ENCODE measurements at regions of chr5 and their contacts with region 1.

Region 1: GRCh38 chr5:154072414-154073171 is 33.8 kb downstream of the MFAP3 start:
- DNase-seq: peak; percentile 22 to 89
- H3K4me3 ChIP-seq: peak overlapping the region in 1 of 2 donors; percentile 38
- H3K27ac ChIP-seq: peak overlapping the region in 1 of 2 donors; percentile 5
- H3K4me1 ChIP-seq: no peaks in the 10 kb centered on the region
- H3K27me3 ChIP-seq: no peaks in the 10 kb centered on the region
- CTCF ChIP-seq: peak; percentile 90 to 93 (median 90)

Region 2: DNA sequence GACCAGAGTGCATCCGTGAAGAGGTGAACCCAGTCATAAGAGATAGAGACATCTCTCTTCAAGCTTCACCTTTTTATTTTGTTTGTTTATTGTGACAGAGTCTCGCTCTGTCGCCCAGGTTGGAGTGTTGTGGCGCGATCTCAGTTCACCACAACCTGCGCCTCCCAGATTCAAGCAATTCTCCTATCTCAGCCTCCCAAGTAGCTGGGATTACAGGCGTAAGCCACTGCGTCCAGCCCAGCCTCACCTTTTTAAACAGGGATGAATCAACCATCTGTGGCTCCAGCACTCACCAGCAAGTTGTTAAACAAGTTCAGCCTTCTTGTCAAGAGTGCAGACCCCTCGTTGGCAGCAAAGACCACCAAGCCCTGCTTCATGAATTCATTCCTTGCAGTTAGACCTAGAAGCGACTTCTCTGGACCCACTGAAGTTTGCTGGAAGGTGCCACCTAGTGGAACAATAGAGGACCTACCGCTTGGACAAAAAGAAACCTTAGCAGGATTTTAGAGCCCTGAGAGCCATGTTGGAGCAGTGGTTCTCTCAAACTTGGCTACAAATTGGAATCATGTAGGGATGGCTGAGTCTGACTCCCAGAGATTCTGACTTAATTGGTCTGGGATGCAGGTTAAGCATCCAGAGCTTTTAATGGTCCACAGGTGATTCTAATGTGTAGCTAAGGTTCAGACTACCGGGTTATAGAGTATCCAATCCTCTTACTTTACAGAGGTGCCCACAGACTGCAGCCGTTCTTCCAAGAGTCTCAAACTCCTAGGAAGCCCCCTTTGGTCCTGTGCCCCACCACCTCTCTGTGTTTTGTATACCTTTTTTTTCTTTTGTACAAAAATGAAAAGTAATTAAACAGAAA is 107.5 kb after region 1 on chr5:
- intact Hi-C with region 1: loop called (anchors 1 kb)
- DNase-seq: no peak
- H3K4me3 ChIP-seq: no peak overlapping the region
- H3K27ac ChIP-seq: no peak overlapping the region
- H3K4me1 ChIP-seq: peaks cover 0 to 3% of the 10 kb centered on the region in 2 donors
- H3K27me3 ChIP-seq: no peaks in the 10 kb centered on the region
- CTCF ChIP-seq: peak; percentile 54 to 76 (median 75)

Region 3: DNA sequence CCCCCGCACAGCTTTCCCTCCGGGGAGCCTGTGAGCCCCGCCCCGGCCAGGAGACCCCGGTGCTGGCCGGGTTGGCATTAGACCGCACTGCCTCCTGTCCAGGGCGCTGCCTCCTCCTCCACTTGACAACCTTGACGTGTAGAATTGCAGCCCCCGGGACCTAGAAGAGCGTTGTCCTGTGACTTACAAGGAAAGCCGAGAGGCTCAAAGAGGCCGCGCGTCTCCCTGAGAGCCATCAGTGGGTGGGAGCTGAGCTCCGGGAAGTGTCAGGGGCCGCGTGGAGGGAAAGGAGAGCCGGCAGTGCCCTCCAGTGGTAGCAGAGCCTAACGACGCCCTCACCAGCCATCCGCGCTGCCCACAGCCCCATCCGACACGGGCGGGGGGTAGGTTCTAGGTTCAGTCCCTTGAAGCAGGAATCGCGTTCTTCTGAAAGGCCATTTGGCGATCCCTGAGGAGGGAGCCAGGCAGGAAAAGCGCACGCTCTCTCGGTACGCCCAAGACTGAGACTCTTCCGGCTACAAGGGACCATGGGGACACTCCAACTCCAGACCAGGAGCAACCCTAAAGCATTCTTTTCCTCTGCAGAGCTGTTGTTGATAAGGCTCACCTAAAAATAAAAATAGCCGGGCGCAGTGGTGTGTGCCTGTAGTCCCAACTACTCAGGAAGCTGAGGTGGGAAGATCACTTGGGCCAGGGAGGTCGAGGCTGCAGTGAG is 332.6 kb after region 1 on chr5:
- intact Hi-C with region 1: loop called (anchors 1 kb)
- DNase-seq: peak; percentile 28 to 89
- H3K4me3 ChIP-seq: peak overlapping the region; percentile 42 to 64
- H3K27ac ChIP-seq: no peak overlapping the region
- H3K4me1 ChIP-seq: peaks cover 4 to 5% of the 10 kb centered on the region in 2 donors
- H3K27me3 ChIP-seq: no peaks in the 10 kb centered on the region
- CTCF ChIP-seq: peak; percentile 78 to 92 (median 87)

Region 4: GRCh38 chr5:154630410-154630809 is 557.8 kb after region 1 on chr5:
- intact Hi-C with region 1: loop called (anchors 10 kb)
- DNase-seq: peak in 1 of 2 donors; percentile 19
- H3K4me3 ChIP-seq: no peak overlapping the region
- H3K27ac ChIP-seq: no peak overlapping the region
- H3K4me1 ChIP-seq: no peaks in the 10 kb centered on the region
- H3K27me3 ChIP-seq: no peaks in the 10 kb centered on the region
- CTCF ChIP-seq: no peak

Measured in ascending aorta (tissue), 2 donors.